GM13977 (cell line): ENCODE measurements at regions of chr3 and their contacts with region 1.

Region 1: GRCh38 chr3:152519376-152519775 is 250.6 kb downstream of the MBNL1 start:
- DNase-seq: no peak
- CTCF ChIP-seq: no peak

Region 2: GRCh38 chr3:152416808-152417580 is 102.4 kb before region 1 on chr3:
- in situ Hi-C with region 1: no loop called
- DNase-seq: no peak
- CTCF ChIP-seq: no peak

Region 3: GRCh38 chr3:152477422-152477821 is 42.0 kb before region 1 on chr3:
- in situ Hi-C with region 1: loop called (anchors 5 kb)
- DNase-seq: no peak
- CTCF ChIP-seq: no peak